CD8-positive, alpha-beta T cell (primary cell): ENCODE measurements at regions of chr6 and their contacts with region 1.

Region 1: DNA sequence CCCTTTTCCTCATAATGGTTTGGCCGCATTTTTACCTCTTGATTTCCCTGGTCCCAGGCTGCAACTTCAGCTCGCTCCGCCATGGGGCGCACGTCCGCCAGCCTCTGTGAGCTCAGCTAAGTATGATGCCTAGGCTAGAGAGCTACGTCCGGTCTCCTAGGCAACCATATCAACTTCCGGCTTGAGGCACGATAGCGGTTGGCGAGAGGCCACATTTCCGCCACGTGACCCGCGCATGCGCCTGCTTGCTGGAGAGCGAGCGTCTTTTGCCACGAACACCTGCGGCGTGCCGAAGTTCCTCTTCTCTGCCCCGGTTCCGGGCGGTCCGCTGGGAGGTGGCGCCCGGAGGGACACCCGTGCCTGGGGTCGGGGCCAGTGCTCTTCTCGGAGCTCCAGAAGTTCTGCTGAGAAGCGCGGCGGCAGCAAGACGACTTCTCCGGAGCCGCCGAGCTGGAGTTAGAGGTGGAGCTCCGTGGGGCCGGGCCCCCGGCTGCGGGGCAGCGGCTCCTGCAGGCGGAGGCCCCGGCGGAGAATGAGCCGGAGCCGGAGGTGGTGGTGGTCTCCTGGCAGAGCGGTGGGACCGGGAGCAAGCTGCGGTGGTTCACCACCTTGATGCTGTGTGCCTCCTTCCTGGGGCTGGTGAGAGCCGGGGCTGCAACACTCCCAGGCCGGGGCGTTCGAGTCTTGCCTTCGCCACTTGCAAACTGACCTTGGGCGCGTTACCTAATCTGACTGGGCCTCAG is 172.0 kb downstream of the SLC16A10 start:
- DNase-seq: peak; percentile 98 to 100 (median 99)
- ATAC-seq: peak; percentile 96
- H3K4me3 ChIP-seq: peak overlapping the region; percentile 68 to 82
- H3K4me3 Mint-ChIP-seq: peak overlapping the region; percentile 86
- H3K27ac ChIP-seq: peak overlapping the region; percentile 90
- H3K27ac Mint-ChIP-seq: peak overlapping the region; percentile 90
- H3K4me1 ChIP-seq: peaks cover 18% of the 10 kb centered on the region
- H3K4me1 Mint-ChIP-seq: peaks cover 28% of the 10 kb centered on the region
- H3K27me3 ChIP-seq: no peaks in the 10 kb centered on the region
- H3K27me3 Mint-ChIP-seq: no peaks in the 10 kb centered on the region
- CTCF ChIP-seq: peak; percentile 80

Region 2: DNA sequence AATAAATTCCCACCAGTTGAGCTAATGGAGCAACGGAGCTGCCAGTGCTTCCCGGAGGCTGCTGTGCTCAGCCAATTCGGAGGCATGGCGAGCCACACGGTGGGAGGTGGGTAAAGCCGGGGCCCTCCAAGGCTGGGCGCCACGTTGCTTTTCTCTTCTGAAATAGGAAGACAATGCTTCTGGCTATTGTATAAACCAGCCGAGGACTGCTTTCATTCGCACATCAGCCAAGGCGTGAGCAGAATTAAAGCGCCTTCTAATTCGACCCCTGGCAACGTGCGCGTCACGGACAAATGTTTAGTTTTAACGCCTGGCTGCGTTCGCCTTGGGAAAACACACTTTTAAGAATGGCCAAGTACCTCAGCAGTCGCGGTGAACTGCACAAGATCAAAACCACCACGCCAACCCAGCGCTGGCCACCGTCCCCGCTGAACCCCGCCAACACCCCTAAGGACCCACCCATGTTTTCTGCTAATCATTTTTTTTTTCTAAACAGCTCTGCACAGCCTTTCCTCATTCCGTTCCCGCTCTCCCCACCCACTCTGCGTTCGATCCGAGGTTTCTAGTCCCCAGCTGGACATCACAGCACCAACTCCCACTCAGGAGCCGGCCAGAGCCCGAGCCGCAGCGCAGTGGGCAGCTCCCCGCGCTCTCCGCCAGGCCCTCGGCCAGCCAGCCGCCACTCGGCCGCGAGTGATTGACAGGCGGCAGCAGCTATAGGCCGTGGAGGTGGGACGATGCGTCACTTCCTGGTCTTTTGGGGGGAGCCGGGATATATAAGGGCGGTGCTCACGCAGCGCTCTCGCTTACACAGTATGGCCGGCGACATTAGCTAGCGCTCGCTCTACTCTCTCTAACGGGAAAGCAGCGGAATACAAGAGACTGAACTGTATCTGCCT is 385.0 kb before region 1 on chr6 and contains the start of gene AMD1:
- CTCF ChIA-PET with region 1: interaction called, 3 read pairs
- POLR2A ChIA-PET with region 1: interaction called, 3 read pairs
- intact Hi-C with region 1: loop called (anchors 2 to 5 kb)
- DNase-seq: peak; percentile 89 to 98 (median 96)
- ATAC-seq: peak; percentile 71
- H3K4me3 ChIP-seq: peak within 1 kb of the TSS; percentile 83 to 90
- H3K4me3 Mint-ChIP-seq: peak within 1 kb of the TSS; percentile 99
- H3K27ac ChIP-seq: peak within 1 kb of the TSS; percentile 92 to 95
- H3K27ac Mint-ChIP-seq: peak within 1 kb of the TSS; percentile 99
- H3K4me1 ChIP-seq: peaks cover 25% of the 10 kb centered on the region
- H3K4me1 Mint-ChIP-seq: peaks cover 33% of the 10 kb centered on the region
- H3K27me3 ChIP-seq: no peaks in the 10 kb centered on the region
- H3K27me3 Mint-ChIP-seq: no peaks in the 10 kb centered on the region
- CTCF ChIP-seq: no peak
- total RNA-seq, gene AMD1: 161 to 167 TPM

Region 3: GRCh38 chr6:111087106-111087835 is 172.0 kb before region 1 on chr6 and contains the start of gene SLC16A10:
- CTCF ChIA-PET with region 1: interaction called, 3 read pairs
- POLR2A ChIA-PET with region 1: interaction called, 3 read pairs
- intact Hi-C with region 1: loop called (anchors 1 to 5 kb)
- DNase-seq: peak; percentile 70 to 92 (median 83)
- ATAC-seq: peak; percentile 86
- H3K4me3 ChIP-seq: peak within 1 kb of the TSS; percentile 56 to 70
- H3K4me3 Mint-ChIP-seq: peak within 1 kb of the TSS; percentile 96
- H3K27ac ChIP-seq: peak within 1 kb of the TSS; percentile 44 to 55
- H3K27ac Mint-ChIP-seq: peak within 1 kb of the TSS; percentile 96
- H3K4me1 ChIP-seq: peaks cover 25% of the 10 kb centered on the region
- H3K4me1 Mint-ChIP-seq: peaks cover 46% of the 10 kb centered on the region
- H3K27me3 ChIP-seq: no peaks in the 10 kb centered on the region
- H3K27me3 Mint-ChIP-seq: peaks cover 2% of the 10 kb centered on the region
- CTCF ChIP-seq: no peak
- total RNA-seq, gene SLC16A10: 15.7 to 18.5 TPM

Region 4: DNA sequence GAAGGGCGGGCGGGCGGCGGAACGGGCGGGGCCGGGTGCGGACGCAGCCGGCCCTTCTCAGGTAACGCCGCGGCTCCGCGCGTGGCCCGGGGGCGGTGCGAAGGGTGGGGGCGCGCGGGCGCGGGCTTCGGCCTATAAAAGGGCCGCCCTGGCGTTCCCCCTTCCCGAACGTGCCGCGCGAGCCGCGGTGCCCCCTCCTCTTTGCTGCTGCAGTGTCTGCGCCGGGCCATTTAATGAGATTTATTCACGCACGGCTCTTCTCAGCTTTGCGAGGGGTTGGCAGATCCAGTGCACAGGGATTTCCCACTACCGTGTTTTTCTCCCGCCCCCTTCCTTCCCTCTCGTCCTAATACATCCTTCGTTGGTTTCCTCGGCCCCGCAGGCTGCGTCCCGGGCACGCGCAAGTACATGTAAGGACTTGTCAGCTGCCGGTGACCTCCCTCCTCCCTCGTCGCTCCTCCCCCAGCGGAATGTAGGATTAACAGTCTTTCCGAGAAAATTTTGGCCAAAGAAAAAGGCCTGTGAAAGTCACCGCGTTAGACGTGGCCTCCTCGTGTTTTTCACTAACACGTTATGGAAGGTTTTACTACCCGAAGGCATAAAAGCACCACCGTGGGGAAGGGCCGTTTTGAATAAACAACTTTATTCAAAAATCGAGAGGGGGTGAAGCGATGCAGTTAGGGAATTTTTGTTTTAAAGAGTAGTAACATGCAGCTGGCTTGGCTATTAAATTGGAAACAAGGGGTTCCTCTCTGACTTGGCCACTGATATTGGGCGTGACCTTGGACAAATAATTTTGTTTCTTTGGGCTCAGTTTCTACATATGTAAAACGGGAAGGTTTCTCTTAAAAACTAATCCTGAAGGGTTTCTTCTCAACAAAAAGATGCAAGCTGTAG is 224.7 kb after region 1 on chr6:
- CTCF ChIA-PET with region 1: interaction called, 37 read pairs
- POLR2A ChIA-PET with region 1: interaction called, 37 read pairs
- intact Hi-C with region 1: loop called (anchors 1 kb)
- DNase-seq: peak in 6 of 9 experiments; percentile 56 to 93 (median 78)
- ATAC-seq: peak; percentile 24
- H3K4me3 ChIP-seq: peak overlapping the region; percentile 88 to 92
- H3K4me3 Mint-ChIP-seq: peak overlapping the region; percentile 99
- H3K27ac ChIP-seq: peak overlapping the region; percentile 89 to 91
- H3K27ac Mint-ChIP-seq: peak overlapping the region; percentile 99
- H3K4me1 ChIP-seq: peaks cover 12% of the 10 kb centered on the region
- H3K4me1 Mint-ChIP-seq: peaks cover 45% of the 10 kb centered on the region
- H3K27me3 ChIP-seq: no peaks in the 10 kb centered on the region
- H3K27me3 Mint-ChIP-seq: no peaks in the 10 kb centered on the region
- CTCF ChIP-seq: no peak

Region 5: DNA sequence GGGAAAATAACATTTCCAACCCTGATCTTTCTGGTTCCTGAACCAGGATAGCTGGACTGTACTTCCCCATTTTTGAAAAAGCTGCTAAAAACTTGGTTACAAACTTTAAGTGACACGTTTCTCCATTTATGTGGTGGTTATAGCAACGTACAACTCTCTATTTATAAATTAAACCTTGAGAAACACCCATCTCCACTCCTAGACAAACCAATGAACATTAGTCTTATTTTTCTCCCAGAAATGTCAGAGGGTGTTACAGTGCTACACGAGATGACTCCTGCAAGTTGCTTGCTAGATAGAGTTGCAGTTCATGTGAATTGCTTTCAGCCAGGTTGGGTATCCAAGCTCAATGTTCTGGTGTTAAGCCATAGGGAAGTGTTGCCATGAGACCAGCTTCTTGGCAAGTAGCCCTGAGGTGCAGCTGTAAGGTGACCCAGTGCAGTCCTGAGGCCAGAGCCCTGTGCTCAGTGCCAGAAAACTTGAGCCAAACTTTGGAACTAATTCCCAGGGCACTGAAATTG is 275.0 kb after region 1 on chr6:
- CTCF ChIA-PET with region 1: no interaction called
- POLR2A ChIA-PET with region 1: no interaction called
- intact Hi-C with region 1: no loop called
- DNase-seq: no peak
- ATAC-seq: no peak
- H3K4me3 ChIP-seq: no peak overlapping the region
- H3K4me3 Mint-ChIP-seq: no peak overlapping the region
- H3K27ac ChIP-seq: no peak overlapping the region
- H3K27ac Mint-ChIP-seq: no peak overlapping the region
- H3K4me1 ChIP-seq: peaks cover 5% of the 10 kb centered on the region
- H3K4me1 Mint-ChIP-seq: peaks cover 37% of the 10 kb centered on the region
- H3K27me3 ChIP-seq: no peaks in the 10 kb centered on the region
- H3K27me3 Mint-ChIP-seq: no peaks in the 10 kb centered on the region
- CTCF ChIP-seq: no peak

Region 6: GRCh38 chr6:111642463-111643158 is 383.4 kb after region 1 on chr6:
- CTCF ChIA-PET with region 1: interaction called, 7 read pairs
- POLR2A ChIA-PET with region 1: no interaction called
- intact Hi-C with region 1: loop called in 1 of 2 experiments (anchors 5 kb)
- DNase-seq: peak in 4 of 9 experiments; percentile 8 to 53 (median 26)
- ATAC-seq: no peak
- H3K4me3 ChIP-seq: no peak overlapping the region
- H3K4me3 Mint-ChIP-seq: no peak overlapping the region
- H3K27ac ChIP-seq: no peak overlapping the region
- H3K27ac Mint-ChIP-seq: no peak overlapping the region
- H3K4me1 ChIP-seq: no peaks in the 10 kb centered on the region
- H3K4me1 Mint-ChIP-seq: no peaks in the 10 kb centered on the region
- H3K27me3 ChIP-seq: no peaks in the 10 kb centered on the region
- H3K27me3 Mint-ChIP-seq: no peaks in the 10 kb centered on the region
- CTCF ChIP-seq: no peak

Region 7: DNA sequence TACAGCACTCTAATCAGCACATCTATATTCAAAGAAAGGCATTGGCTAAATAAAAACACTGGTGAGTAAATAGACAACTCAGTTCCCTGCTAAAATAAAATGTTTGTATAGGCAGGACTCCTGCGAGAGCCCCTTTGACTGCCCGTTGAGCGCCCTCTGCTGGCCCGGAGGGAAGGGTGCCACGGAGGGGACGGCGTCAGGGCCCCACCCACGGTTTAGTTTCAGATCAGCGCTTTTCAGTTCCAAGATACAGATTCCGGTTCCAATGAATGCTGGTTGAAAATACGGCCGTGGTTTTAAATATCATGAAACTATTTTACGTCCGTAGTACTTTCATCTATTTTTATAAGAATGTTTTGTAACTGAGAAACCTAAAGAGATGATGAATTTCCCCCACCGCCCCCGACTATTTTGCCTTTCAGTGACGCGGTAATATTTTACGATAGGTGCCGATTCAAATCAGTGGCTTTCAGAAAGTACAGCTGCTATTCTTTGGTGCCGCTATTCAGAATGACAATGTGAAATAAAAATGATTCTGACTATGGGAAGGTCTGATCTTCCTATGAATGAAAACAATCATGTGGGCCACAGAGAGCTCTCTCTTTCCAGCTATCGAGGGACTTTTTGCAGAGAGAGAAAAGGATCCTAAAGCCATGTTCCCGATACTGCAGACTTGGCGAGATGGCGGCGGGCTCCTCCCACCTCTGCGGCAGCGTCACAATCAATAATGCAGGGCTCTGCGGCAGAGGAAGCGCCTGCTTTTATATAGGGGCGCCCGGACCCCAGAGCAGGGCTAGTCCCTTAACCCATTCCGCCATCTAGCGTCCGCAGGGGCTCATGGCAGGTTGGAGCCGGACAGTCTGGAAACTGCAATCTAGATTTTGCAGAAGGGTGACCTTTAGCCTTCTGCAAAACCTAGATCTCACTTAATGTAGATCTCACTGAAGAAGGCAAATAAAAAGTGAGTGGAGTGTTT is 784.1 kb after region 1 on chr6:
- CTCF ChIA-PET with region 1: interaction called, 14 read pairs
- POLR2A ChIA-PET with region 1: interaction called, 4 read pairs
- intact Hi-C with region 1: loop called (anchors 1 kb)
- DNase-seq: peak; percentile 87 to 96 (median 93)
- ATAC-seq: peak; percentile 93
- H3K4me3 ChIP-seq: peak overlapping the region; percentile 56 to 65
- H3K4me3 Mint-ChIP-seq: peak overlapping the region; percentile 97
- H3K27ac ChIP-seq: peak overlapping the region; percentile 83 to 88
- H3K27ac Mint-ChIP-seq: peak overlapping the region; percentile 99
- H3K4me1 ChIP-seq: peaks cover 6% of the 10 kb centered on the region
- H3K4me1 Mint-ChIP-seq: peaks cover 21% of the 10 kb centered on the region
- H3K27me3 ChIP-seq: no peaks in the 10 kb centered on the region
- H3K27me3 Mint-ChIP-seq: no peaks in the 10 kb centered on the region
- CTCF ChIP-seq: peak; percentile 82